Mammary epithelial cell (primary cell): ENCODE measurements at regions of chr15 and their contacts with region 1.

Region 1: DNA sequence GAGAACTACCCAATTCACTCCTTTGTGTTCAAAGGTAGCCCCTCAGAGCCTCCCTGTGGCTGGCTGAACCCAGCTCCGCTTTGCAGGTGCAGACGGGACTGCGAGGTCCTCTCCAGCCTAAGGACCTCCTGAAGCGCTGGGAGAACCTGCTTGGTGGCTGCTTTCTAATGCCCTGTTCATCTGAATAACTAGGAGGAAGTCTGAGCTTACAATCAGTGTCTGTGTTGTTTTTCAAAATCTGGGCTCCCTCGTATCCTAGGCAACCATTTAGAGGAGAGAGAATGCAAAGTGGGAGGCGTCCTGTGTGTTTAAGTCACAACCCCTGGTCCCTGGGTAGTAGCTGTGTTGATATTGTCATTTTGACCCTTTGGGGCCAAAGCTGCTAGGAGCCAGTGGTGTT is 99.9 kb downstream of the GABRG3 start:
- DNase-seq: no peak
- H3K4me3 ChIP-seq: no peak overlapping the region
- H3K27ac ChIP-seq: no peak overlapping the region
- H3K4me1 ChIP-seq: no peaks in the 10 kb centered on the region
- H3K27me3 ChIP-seq: no peaks in the 10 kb centered on the region
- CTCF ChIP-seq: no peak

Region 2: GRCh38 chr15:26736502-26737248 is 334.2 kb before region 1 on chr15:
- CTCF ChIA-PET with region 1: no interaction called
- dilution Hi-C with region 1: no loop called
- in situ Hi-C with region 1: no loop called
- intact Hi-C with region 1: no loop called
- DNase-seq: no peak
- H3K4me3 ChIP-seq: no peak overlapping the region
- H3K27ac ChIP-seq: no peak overlapping the region
- H3K4me1 ChIP-seq: no peaks in the 10 kb centered on the region
- H3K27me3 ChIP-seq: no peaks in the 10 kb centered on the region
- CTCF ChIP-seq: no peak

Region 3: DNA sequence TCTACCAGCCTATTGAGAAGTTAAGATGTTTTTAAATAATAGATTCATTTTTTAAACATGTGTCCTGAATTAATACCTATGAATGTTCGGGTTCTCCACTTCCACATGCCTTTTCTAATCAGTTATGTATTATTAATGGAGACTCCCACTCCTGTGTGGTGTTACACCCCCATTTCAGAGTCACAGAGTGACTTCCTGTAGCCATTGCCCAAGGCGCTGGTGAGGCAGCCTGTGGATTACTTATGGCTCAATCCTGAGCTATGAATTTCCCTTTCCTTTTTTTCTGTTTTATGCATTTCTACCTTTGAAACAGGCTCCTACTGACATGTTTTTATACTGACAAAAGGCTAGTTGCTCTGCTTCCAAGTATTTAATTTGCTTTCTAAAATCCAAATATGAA is 62.4 kb after region 1 on chr15:
- CTCF ChIA-PET with region 1: no interaction called
- dilution Hi-C with region 1: loop called (anchors 5 kb)
- in situ Hi-C with region 1: no loop called
- intact Hi-C with region 1: no loop called
- DNase-seq: no peak
- H3K4me3 ChIP-seq: no peak overlapping the region
- H3K27ac ChIP-seq: no peak overlapping the region
- H3K4me1 ChIP-seq: no peaks in the 10 kb centered on the region
- H3K27me3 ChIP-seq: no peaks in the 10 kb centered on the region
- CTCF ChIP-seq: no peak